ENCODE measurements at regions of chr20 and their contacts with region 1.

Region 1: GRCh38 chr20:37265152-37265551 is 3.5 kb upstream of the GHRH start:
- DNase-seq: peak; percentile 55
- CTCF ChIP-seq: no peak

Region 2: DNA sequence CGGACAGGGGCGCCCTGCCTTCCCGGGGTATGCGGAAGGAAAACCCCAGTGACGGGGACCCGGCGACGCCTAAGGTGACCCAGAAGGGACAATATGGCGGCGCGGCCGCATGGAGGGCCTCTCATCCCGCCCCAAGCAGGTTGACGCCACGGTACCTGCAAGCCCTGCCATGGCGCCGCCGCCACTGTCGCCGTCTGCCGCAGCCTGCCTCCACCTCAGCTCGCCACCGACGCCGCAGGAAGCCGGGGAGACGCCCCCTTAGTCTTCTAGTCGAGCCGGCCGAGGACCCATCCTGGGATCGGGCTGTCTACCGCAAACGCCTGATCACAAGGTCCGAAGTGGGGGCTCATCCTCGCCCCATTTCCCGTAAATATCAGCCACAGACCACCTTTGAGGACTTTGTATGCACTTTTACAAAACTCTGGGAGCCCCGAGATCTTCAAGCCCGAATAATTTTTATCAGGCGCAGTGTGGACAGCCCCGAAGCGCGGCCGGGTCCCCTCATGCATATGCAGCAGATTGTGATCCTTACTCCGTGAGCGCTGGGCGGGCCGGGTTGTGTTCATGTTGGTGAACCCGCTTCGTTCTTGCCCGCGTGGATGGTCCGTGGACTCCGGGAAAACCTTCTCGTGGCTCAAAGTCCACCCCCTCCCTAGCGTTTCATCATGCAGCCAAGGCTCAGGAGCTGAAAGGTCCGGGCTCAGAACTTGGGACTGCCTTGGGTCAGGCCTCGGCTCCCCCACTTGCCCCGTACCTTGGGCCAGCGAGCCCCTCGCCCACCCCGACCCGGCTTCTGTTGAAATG is 262.7 kb after region 1 on chr20 and contains the start of gene BLCAP:
- in situ Hi-C with region 1: loop called (anchors 5 kb)
- DNase-seq: peak; percentile 98
- CTCF ChIP-seq: no peak

Measured in GM13976 (cell line).